ENCODE measurements at regions of chr11 and their contacts with region 1.

Region 1: GRCh38 chr11:64331557-64332371 is 8.2 kb upstream of the CCDC88B start:
- DNase-seq: peak; percentile 76
- H3K4me3 Mint-ChIP-seq: no peak overlapping the region
- H3K27ac Mint-ChIP-seq: peak overlapping the region; percentile 78
- H3K4me1 Mint-ChIP-seq: peaks cover 26% of the 10 kb centered on the region
- H3K27me3 Mint-ChIP-seq: no peaks in the 10 kb centered on the region

Region 2: DNA sequence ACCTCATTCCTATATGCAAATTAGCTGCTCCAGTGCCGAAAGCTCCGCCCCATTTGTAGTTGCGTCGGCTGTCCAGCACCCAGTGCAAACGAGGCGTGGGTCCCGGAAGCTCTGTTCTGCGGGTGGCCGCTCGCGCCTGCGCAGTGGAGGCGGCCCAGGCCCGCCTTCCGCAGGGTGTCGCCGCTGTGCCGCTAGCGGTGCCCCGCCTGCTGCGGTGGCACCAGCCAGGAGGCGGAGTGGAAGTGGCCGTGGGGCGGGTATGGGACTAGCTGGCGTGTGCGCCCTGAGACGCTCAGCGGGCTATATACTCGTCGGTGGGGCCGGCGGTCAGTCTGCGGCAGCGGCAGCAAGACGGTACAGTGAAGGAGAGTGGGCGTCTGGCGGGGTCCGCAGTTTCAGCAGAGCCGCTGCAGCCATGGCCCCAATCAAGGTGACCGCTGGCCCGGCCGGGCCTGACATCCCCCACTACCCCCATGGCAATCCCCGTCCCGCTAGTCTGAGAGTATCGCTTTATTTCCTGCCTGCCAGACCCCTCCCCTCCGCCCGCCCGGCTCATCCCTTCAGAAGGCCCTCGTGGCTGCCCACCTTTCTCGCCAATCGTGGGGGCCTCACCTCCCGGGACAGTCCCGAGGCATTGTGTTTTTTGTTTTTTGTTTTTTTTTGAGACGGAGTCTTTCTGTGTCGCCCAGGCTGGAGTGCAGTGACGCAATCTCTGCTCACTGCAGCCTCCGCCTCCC is 13.6 kb before region 1 on chr11 and contains the start of gene PRDX5:
- CTCF ChIA-PET with region 1: interaction called, 54 read pairs
- POLR2A ChIA-PET with region 1: interaction called, 12 read pairs
- DNase-seq: peak; percentile 96
- H3K4me3 Mint-ChIP-seq: peak within 1 kb of the TSS; percentile 94
- H3K27ac Mint-ChIP-seq: peak within 1 kb of the TSS; percentile 99
- H3K4me1 Mint-ChIP-seq: peaks cover 36% of the 10 kb centered on the region
- H3K27me3 Mint-ChIP-seq: no peaks in the 10 kb centered on the region
- total RNA-seq, gene PRDX5: 97.4 to 106 TPM

Region 3: DNA sequence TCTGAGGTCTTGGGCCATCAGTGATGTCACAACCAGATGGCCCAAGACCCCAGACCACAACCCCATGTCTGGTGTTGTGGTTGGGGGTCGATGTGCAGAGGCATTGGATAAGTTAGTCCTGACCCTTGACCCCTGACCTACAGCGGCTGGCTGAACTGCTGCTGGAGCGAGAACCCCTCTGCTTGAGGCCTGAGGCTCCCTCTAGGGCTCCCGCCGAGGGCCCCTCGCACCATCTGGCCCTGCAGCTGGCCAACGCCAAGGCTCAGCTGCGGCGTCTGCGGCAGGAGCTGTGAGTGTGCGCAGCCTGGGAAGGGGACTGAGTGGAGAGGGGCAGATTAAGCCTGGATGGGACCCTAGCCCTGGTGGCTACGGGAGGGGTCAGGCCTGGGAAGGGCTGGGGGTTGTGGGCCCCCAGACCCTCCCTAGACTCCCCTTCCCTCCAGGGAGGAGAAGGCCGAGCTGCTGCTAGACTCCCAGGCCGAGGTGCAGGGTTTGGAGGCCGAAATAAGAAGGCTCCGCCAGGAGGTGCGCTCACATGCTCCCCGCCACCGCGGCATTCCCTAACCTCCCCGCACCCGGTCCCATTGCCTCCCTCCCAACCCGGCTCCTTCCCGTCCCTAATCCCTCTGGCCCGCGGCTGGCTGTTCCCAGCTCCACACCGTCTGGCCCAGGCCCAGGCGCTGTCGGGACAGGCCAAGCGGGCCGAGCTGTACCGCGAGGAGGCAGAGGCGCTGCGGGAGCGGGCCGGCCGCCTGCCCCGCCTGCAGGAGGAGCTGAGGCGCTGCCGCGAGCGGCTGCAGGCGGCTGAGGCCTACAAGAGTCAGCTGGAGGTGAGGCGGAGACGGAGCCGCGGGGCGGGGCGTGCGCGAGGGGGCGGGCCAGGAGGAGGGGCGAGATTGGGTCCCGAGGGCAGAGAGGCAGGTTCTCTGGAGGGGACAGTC is 10.4 kb after region 1 on chr11:
- CTCF ChIA-PET with region 1: interaction called, 29 read pairs
- POLR2A ChIA-PET with region 1: interaction called, 4 read pairs
- DNase-seq: peak; percentile 93
- H3K4me3 Mint-ChIP-seq: peak overlapping the region; percentile 84
- H3K27ac Mint-ChIP-seq: no peak overlapping the region
- H3K4me1 Mint-ChIP-seq: peaks cover 53% of the 10 kb centered on the region
- H3K27me3 Mint-ChIP-seq: no peaks in the 10 kb centered on the region

Region 4: GRCh38 chr11:64348611-64349484 is 17.1 kb after region 1 on chr11:
- CTCF ChIA-PET with region 1: interaction called, 29 read pairs
- POLR2A ChIA-PET with region 1: no interaction called
- DNase-seq: no peak
- H3K4me3 Mint-ChIP-seq: no peak overlapping the region
- H3K27ac Mint-ChIP-seq: no peak overlapping the region
- H3K4me1 Mint-ChIP-seq: peaks cover 8% of the 10 kb centered on the region
- H3K27me3 Mint-ChIP-seq: no peaks in the 10 kb centered on the region

Region 5: GRCh38 chr11:64358907-64359711 is 27.3 kb after region 1 on chr11 and contains the start of gene RPS6KA4:
- CTCF ChIA-PET with region 1: interaction called, 15 read pairs
- POLR2A ChIA-PET with region 1: no interaction called
- DNase-seq: peak; percentile 50
- H3K4me3 Mint-ChIP-seq: peak within 1 kb of the TSS; percentile 97
- H3K27ac Mint-ChIP-seq: peak within 1 kb of the TSS; percentile 87
- H3K4me1 Mint-ChIP-seq: peaks cover 48% of the 10 kb centered on the region
- H3K27me3 Mint-ChIP-seq: no peaks in the 10 kb centered on the region
- total RNA-seq, gene RPS6KA4: 31.0 to 43.0 TPM